ENCODE measurements at regions of chr10 and their contacts with region 1.

Region 1: DNA sequence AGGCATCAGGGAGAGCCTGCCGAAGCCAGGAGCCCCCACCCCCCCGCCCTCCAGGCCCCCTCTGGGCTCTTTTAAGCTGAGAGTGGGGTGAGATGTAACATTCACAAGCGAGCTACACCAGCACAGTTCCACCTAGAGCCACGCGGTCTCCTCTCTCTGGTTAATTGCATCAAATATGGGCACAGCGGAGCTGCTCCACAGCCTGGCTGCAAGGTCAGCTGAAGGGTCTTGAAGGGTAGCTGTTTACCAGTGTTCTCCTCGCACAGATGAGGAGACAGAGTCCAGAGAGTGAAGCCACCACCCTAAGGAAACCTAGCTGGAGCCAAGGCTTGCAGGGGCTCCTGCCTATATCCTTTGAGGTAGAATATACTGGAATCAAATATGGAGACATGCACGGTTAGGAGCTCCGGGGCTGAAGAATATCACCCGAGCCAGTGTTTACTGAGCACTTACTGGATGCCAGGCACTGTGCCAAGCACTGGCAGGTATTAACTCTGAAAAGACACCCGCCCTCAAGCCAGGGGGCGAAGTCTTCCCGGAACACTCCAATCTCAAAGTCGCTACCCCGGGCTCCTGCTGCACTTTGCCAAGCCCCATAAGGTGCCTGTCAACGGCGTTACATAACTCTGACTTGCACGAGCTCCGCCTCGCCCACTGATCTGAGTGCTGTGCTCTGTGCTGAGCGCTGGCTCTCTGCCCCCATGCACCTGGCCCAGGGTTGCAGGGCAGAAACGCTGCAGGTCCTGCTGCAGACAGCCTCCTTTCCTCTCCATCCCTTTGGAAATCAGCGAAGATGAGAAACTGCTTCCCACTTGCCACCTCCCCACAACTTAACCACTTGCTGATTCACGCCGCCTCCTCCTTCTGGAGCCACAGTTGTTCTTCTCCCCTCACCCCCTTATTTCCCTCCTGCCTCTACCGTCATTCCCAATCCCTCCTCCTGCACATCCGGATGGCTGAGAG is 5.4 kb downstream of the CHST15 start:
- DNase-seq: no peak
- H3K4me3 ChIP-seq: no peak overlapping the region
- H3K27ac ChIP-seq: no peak overlapping the region
- H3K4me1 ChIP-seq: peaks cover 10% of the 10 kb centered on the region
- H3K27me3 ChIP-seq: no peaks in the 10 kb centered on the region
- CTCF ChIP-seq: no peak

Region 2: DNA sequence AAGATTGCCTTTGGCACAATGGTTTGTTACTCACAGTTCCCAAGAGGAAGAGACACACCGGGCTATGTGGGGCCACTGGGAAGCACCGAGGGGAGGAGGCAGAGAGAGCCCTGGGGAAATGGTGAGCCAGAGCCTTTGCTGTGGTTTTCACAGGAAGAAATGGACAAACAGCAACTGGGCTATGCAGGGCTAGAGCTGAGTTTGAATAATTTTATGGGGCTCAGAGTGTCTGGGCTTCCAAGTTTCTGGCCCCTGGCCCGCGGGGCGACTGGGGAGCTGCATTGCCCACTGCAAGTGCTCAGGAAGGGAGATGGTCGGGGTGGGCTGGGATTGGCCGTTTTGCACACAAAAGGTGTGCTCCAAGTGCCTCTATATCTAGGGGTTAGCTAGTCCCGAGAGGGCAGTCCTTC is 87.2 kb before region 1 on chr10:
- CTCF ChIA-PET with region 1: interaction called, 4 read pairs
- dilution Hi-C with region 1: loop called (anchors 5 kb)
- in situ Hi-C with region 1: loop called in 1 of 2 experiments (anchors 10 kb)
- intact Hi-C with region 1: loop called (anchors 1 kb)
- DNase-seq: peak; percentile 90
- H3K4me3 ChIP-seq: no peak overlapping the region
- H3K27ac ChIP-seq: no peak overlapping the region
- H3K4me1 ChIP-seq: peaks cover 38% of the 10 kb centered on the region
- H3K27me3 ChIP-seq: no peaks in the 10 kb centered on the region
- CTCF ChIP-seq: no peak